AG04450 (cell line): ENCODE measurements at regions of chr19 and their contacts with region 1.

Region 1: DNA sequence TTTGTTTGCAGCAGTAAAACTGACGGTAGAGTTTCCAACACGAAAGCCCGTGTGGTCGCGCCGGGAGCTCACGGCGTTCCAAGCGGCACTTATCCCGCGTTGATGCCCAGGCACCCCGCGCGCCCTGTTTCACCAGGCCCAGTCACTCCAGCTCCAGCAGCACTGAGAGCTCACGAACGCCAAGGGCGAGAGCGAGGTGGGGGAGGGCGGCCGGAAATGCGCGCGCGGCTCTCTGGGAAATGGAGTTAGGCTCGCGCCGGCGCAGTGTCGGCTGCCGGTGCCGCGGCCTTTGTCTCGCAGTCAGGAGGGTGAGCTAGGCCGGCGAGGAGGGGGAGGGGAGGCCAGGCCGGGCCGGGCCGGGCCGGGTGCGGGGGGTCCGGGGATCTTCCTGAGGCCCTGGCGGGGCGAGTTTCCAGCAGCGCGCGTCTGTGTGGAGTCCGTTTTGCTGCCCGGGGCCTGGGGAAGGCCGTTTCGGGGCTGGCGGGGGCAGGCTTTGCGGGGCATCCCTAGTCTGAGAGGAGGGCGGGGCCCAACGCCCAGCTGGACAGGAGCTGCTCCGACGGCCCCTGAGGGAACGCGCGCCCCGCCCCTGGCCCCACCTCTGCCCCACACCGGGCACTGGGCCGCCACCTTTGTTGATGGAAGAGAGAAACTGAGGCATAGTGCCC is at the start of gene ZNF135:
- DNase-seq: peak; percentile 18
- H3K4me3 ChIP-seq: peak within 1 kb of the TSS; percentile 56
- H3K27ac ChIP-seq: peak within 1 kb of the TSS; percentile 65
- H3K27me3 ChIP-seq: peaks cover 2% of the 10 kb centered on the region
- CTCF ChIP-seq: no peak
- polyA plus RNA-seq, gene ZNF135: 6.4 and 6.6 TPM in 2 replicates

Region 2: DNA sequence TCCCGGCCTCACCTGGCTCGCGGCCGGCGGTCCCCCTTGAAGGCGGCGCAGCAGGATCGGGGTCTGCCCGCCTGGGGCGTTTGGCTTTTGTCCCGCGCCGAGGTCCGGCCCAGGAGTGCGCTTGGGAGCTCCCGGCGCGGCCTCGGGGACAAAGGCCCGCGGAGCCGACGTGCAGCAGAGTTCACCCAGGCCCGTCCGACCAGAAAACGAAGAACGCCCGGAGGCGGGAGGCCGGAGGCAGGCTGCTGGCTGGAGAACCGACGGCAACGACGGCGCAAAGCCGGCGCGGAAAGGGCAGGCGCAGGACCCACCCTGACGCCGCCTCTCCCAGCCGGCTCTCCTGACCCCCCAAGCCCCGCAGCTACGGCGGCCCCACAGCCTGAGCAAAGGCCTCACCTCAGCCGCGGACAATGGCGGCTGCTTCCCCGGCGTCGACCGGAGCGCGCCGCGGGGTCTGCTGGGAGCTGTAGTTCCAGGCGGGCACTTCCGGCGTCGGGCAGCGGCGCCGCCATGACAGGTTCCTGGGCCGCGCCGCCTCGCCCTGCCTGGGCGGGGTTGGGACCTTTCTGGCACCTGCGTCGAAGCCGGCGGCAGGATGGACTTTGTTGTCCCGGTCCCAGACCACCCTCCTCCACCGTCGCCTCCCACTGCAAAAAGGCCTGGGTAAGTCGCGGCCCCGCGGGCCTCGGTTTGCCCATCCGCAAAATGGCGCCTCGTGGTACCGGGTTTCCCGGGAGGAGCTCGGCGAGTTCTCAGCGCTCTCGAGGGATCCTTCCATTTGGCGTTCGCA is 56.6 kb before region 1 on chr19 and contains the start of gene ZNF606:
- CTCF ChIA-PET with region 1: no interaction called
- POLR2A ChIA-PET with region 1: interaction called, 11 read pairs
- DNase-seq: peak; percentile 44
- H3K4me3 ChIP-seq: peak within 1 kb of the TSS; percentile 92
- H3K27ac ChIP-seq: peak within 1 kb of the TSS; percentile 65
- H3K27me3 ChIP-seq: no peaks in the 10 kb centered on the region
- CTCF ChIP-seq: no peak
- polyA plus RNA-seq, gene ZNF606: 4.9 TPM in 2 replicates